SK-N-SH (cell line): ENCODE measurements at regions of chr5 and their contacts with region 1.

Region 1: DNA sequence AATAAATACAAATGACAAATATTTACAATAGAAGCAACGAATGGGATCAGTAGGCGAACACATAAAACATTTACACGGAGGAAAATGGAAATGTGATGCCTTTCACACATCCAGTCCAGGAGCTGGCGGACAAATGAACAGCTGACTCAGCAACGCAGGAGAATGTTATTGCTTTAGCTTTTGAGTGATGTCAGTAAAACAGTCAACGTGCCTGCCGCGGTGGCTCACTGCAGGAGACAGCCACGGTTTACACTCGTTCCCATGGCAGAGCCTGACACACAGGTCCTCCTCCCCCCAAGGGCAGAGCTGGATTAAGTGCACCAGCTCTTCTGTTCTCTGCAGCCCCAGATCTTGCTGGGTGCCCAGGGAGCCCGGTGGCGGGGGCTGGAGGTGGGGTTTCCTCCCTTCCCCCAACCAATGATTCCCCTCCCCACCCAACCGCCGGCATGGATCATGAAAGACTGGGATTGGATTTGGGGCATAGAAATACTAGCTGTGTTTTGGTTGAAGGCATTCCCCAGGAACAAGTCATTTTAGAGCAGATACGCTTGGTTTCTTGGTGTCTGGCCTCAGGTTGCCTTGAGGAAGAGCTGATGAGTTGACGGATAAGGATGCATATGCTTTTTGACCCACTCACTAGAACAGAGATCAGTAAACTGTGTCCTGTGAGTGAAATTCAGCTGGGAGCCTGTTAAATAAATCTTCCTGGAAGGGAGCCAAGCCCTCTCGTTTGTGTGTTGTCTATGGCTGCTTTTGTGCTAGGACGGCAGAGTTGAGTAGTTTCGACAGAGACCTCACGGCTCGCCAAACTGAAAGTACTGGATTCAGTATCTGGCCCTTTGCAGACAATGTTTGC is 12.5 kb downstream of the STC2 start:
- DNase-seq: peak; percentile 83
- H3K4me3 ChIP-seq: no peak overlapping the region; a peak in 1 of 4 replicates
- H3K27ac ChIP-seq: peak overlapping the region; percentile 10 to 80; a peak in 2 of 4 replicates
- H3K4me1 ChIP-seq: peaks cover 13 to 29% of the 10 kb centered on the region in 2 experiments; a peak in 3 of 4 replicates
- H3K27me3 ChIP-seq: no peaks in the 10 kb centered on the region
- CTCF ChIP-seq: no peak
- EP300 ChIP-seq: peak in 1 of 2 experiments; percentile 3; a peak in 1 of 4 replicates
- RAD21 ChIP-seq: no peak

Region 2: DNA sequence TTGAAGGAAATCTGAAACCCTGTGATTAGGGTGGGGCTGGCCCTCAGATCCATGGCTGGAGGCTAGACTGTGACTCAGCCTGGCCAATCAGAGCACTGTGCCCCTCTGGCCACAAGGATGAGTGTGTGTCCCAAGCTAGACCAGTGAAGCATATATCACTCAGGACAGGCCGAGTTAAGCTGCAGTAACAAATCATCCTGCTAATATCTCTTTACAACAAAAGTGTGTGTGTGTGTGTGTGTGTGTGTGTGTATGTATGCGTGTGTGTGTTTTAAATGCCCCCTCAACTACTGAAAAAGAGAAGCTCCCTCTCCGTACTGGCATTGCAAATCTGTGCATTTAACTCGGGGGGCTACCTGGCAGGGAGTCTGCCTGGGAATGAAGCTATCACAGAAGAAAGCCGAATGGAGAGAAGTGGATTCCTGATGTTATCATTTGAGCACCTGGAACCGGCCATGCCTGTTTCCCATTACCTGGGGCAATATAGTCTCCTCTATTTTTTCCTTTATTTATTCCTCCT is 13.1 kb before region 1 on chr5:
- CTCF ChIA-PET with region 1: interaction called, 12 read pairs
- POLR2A ChIA-PET with region 1: interaction called, 3 read pairs
- DNase-seq: no peak
- H3K4me3 ChIP-seq: no peak overlapping the region
- H3K27ac ChIP-seq: no peak overlapping the region
- H3K4me1 ChIP-seq: peaks cover 0 to 3% of the 10 kb centered on the region in 2 experiments; a peak in 1 of 4 replicates
- H3K27me3 ChIP-seq: no peaks in the 10 kb centered on the region
- CTCF ChIP-seq: no peak
- EP300 ChIP-seq: no peak
- RAD21 ChIP-seq: no peak

Region 3: GRCh38 chr5:173331956-173332479 is 16.3 kb after region 1 on chr5:
- CTCF ChIA-PET with region 1: interaction called, 105 read pairs
- POLR2A ChIA-PET with region 1: interaction called, 40 read pairs
- DNase-seq: peak; percentile 91
- H3K4me3 ChIP-seq: peak overlapping the region in 1 of 2 experiments; percentile 30; a peak in 1 of 4 replicates
- H3K27ac ChIP-seq: no peak overlapping the region; a peak in 1 of 4 replicates
- H3K4me1 ChIP-seq: peaks cover 0 to 20% of the 10 kb centered on the region in 2 experiments; a peak in 1 of 4 replicates
- H3K27me3 ChIP-seq: no peaks in the 10 kb centered on the region
- CTCF ChIP-seq: peak; percentile 91
- EP300 ChIP-seq: no peak
- RAD21 ChIP-seq: peak; percentile 99

Region 4: DNA sequence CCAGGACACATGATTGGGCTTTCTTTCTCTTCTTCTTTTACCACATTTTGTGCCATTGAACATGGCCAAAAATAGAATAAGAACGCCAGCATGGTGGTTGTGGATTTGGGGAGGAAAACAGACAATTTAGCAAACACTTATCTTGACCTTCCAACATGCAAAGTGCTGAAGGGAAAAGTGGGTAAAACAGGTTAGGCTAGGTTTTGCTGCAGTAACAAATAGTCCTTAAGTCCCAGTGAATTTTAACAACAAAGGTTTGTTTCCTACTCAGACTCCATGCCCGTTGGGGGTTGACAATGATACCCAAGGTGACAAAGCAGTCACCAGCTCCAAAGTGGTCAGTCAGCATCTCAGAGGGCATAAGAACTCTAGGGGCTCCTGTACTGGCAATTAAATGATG is 55.7 kb after region 1 on chr5:
- CTCF ChIA-PET with region 1: no interaction called
- POLR2A ChIA-PET with region 1: no interaction called
- DNase-seq: no peak
- H3K4me3 ChIP-seq: no peak overlapping the region
- H3K27ac ChIP-seq: no peak overlapping the region
- H3K4me1 ChIP-seq: no peaks in the 10 kb centered on the region
- H3K27me3 ChIP-seq: peaks cover 13% of the 10 kb centered on the region; the same call in 1 of the 2 replicates
- CTCF ChIP-seq: no peak
- EP300 ChIP-seq: no peak
- RAD21 ChIP-seq: no peak

Region 5: GRCh38 chr5:173498286-173498685 is 182.6 kb after region 1 on chr5:
- CTCF ChIA-PET with region 1: no interaction called
- POLR2A ChIA-PET with region 1: no interaction called
- DNase-seq: no peak
- H3K4me3 ChIP-seq: no peak overlapping the region
- H3K27ac ChIP-seq: no peak overlapping the region
- H3K4me1 ChIP-seq: peaks cover 0 to 3% of the 10 kb centered on the region in 2 experiments; a peak in 1 of 4 replicates
- H3K27me3 ChIP-seq: no peaks in the 10 kb centered on the region
- CTCF ChIP-seq: no peak
- EP300 ChIP-seq: no peak
- RAD21 ChIP-seq: no peak

Region 6: GRCh38 chr5:173515517-173515916 is 199.8 kb after region 1 on chr5:
- CTCF ChIA-PET with region 1: no interaction called
- POLR2A ChIA-PET with region 1: no interaction called
- DNase-seq: no peak
- H3K4me3 ChIP-seq: no peak overlapping the region
- H3K27ac ChIP-seq: no peak overlapping the region
- H3K4me1 ChIP-seq: no peaks in the 10 kb centered on the region; a peak in 1 of 4 replicates
- H3K27me3 ChIP-seq: no peaks in the 10 kb centered on the region; the same call in 1 of the 2 replicates
- CTCF ChIP-seq: no peak
- EP300 ChIP-seq: no peak
- RAD21 ChIP-seq: no peak